Posterior cingulate gyrus (tissue), 11 donors: ENCODE measurements at regions of chr16 and their contacts with region 1.

Region 1: DNA sequence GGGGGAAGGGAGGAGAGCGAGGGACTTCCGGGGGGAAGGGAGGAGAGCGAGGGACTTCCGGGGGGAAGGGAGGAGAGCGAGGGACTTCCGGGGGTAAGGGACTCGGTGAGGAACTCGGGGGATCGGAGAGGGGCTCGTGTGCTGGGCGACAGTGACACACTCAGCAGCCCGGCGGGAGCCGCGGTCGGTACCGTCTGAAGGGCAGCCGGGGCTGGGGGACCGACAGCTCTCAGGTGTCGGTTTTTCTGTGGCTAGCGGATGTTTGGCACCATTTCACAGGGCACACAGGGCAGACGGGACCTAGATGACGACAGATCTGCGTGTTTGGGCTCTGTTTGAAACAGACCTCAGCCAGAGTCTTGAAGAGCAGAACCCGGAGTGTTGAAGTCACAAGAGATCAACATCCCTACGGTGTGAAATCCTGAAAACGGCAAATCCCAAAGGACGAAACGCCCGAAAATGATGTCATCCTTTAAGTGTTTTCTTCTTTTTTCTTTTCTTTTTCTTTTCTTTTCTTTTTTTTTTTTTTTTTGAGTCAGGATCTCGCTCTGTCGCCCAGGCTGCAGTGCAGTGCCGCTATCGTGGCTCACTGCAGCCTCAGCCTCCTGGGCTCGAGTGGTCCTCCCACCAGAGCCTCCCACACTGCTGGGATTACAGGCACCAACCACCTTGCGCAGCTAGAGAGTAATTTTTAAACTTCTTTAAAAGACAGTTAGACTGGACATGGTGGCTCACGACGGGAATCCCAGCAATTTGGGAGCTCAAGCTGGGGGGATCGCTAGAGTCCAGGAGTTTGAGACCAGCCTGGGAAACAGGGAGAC is 23.9 kb downstream of the ZNF778 start:
- DNase-seq: peak; percentile 57 to 96 (median 70)

Region 2: DNA sequence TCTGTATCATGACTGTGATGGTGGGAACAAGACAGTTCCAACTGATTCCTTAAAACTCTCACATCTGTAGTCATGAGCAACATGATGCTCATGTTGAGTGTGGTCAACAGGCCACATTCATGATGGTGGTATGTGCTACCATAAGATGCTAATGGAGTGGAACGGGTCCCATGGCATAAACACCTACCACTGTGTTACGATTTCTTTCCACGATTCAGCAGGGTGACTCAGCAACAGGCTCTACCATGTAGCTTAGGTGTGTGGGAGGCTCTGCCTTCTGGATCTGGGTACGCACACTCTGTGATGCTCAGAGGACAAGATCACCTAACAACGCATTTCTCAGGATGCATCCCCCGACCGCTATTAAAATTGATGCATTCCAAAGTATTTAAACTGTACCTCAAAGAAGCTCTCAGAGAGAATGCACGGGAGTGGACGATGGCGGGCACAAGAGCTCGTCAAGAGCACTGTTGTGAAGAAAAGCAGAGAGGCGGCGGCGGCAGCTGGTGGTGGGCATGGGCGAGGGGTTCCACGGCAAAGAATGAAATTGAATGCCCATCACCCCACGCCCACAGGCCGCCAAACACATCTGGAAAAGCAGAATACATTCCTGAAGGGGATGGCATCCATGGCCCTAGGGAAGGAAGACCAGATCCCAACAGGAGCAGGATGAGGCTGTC is 109.4 kb after region 1 on chr16:
- intact Hi-C with region 1: no loop called
- DNase-seq: peak in 2 of 10 donors; percentile 63 to 88

Region 3: GRCh38 chr16:89507834-89508590 is 266.6 kb after region 1 on chr16 and contains the start of gene SPG7:
- intact Hi-C with region 1: loop called (anchors 10 kb)
- DNase-seq: peak; percentile 61 to 97 (median 78)

Region 4: GRCh38 chr16:89657442-89658220 is 416.2 kb after region 1 on chr16 and contains the starts of genes CHMP1A and SPATA33:
- intact Hi-C with region 1: loop called (anchors 5 kb)
- DNase-seq: peak; percentile 84 to 99 (median 92)